HepG2 (cell line): ENCODE measurements at regions of chr3 and their contacts with region 1.

Region 1: DNA sequence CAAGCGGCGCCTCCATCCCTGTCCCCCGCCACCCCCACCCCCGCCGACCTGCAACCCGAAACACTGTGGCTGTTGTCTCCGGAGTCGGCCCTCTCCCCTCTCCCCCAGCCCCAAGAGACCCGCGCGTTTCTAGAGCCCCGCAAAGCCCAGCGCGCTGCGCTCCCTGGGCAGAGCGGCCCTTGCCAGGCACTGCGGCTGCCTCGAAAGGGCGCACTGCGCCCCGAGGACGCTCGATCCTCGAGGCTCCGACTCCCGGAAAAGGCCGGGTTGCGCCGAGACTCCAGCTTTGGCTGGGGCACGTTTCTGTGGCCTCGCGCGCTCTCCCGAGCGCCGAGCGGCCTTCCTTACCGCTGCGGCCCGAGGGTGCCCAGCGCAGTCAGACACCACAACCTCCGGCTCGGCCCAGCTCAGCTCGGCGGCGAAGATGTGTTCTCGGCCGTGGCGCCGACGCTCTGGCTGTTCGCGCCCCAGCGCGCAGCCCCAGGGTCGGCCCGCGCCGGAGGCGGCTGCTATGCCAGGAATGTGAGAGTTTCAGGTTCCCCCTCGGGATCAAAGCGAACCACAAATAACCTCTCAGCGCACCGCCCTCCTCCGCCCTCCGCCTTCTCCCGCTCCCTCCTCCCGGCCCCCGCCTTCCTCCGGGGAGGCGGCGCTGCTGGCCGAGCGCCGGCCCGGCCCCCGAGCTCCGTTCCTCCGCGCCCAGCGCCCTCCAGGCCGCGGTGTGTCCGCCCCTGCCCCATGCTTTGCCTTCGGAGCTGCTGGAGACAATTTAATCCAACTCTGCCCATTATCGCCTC is at the start of gene AMOTL2:
- DNase-seq: peak; percentile 89
- ATAC-seq: peak; percentile 81
- H3K4me3 ChIP-seq: peak within 1 kb of the TSS; percentile 89 to 94 (median 91)
- H3K27ac ChIP-seq: peak within 1 kb of the TSS; percentile 97
- H3K4me1 ChIP-seq: peaks cover 74% of the 10 kb centered on the region
- H3K27me3 ChIP-seq: peaks cover 0 to 24% of the 10 kb centered on the region in 2 experiments; a peak in 4 of 5 replicates
- CTCF ChIP-seq: no peak
- EP300 ChIP-seq: peak; percentile 88; a peak in 3 of 4 replicates
- POLR2A ChIP-seq: peak; percentile 84 to 96
- RAD21 ChIP-seq: no peak; the same call in none of the 2 replicates
- total RNA-seq, gene AMOTL2: 11.5 and 17.3 TPM in 2 replicates

Region 2: DNA sequence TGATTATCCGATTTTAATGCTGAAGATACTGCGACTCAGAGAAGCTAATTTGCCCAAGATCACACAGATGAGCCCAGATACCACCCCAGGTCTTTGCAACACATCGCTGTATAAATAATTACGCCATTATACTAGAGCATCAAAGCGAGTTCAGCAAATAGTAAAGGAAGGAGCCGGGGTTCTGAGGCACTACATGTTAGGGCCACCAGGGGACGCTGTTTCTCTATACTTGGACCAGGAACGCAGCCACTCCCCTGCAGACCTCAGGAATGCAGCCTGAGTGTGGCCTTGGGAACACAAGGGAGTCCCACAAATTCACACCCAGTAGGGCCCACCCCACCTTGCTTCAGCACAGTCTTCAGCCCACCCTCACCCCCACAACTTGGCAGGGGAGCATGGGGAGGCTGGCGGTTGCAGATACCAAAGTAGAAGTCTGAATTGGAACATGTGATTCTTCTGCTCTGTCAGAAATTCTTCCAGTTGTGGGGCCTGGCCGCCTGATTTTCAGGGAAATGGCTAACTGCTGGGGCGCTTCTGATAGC is 65.8 kb before region 1 on chr3:
- CTCF ChIA-PET with region 1: interaction called, 31 read pairs
- POLR2A ChIA-PET with region 1: interaction called, 53 read pairs
- in situ Hi-C with region 1: loop called (anchors 5 kb)
- intact Hi-C with region 1: loop called (anchors 1 kb)
- DNase-seq: peak; percentile 74
- ATAC-seq: peak; percentile 65
- H3K4me3 ChIP-seq: peak overlapping the region; percentile 27 to 60 (median 37); a peak in 5 of 6 replicates
- H3K27ac ChIP-seq: no peak overlapping the region
- H3K4me1 ChIP-seq: peaks cover 67% of the 10 kb centered on the region
- H3K27me3 ChIP-seq: no peaks in the 10 kb centered on the region; a peak in 1 of 5 replicates
- CTCF ChIP-seq: peak; percentile 99
- EP300 ChIP-seq: no peak
- POLR2A ChIP-seq: no peak
- RAD21 ChIP-seq: peak; percentile 98

Region 3: DNA sequence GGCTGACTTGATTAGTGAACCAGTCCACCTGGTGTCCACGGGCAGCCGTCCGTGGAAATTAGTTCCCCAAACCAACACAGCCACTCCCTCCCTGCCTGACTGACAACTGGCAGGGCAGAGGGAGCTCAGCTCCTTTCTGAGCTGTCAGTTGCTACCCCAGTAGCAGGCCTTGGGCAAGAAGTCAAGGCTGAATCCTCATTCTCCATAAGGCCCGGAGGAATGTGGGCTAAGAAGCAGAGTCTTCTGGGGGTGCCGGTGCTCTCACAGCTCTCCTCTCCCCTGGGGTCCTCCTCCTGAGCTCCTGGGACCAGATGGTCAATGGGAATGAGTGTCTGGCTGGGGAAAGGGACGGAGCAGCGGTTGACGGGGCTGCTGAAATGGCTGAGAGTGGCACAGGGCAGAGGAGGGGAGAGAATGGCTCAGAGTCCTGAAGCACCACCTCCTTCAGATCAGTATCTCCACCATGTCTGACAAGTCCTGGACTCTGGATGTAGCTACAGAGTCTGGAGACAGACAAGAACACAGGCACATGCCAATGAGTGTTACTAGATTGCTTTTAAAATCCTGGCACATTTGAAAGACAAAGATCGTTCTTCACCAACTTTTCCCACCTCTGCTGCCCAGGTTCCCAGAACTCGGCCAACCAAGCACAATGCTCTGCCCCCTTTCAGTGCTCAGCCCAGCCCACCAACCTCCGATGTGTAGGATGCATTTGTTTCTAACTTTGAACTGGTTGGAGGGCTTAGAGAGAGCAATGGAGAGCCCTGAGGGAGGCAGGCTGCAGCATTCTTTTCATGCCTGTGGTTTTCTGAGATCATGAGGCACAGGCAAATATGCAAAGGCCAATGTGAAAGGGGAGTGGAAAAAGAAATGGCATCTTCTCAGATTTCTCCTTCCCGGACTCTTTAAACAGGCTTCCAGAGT is 16.7 kb before region 1 on chr3:
- CTCF ChIA-PET with region 1: no interaction called
- POLR2A ChIA-PET with region 1: interaction called, 140 read pairs
- in situ Hi-C with region 1: no loop called
- intact Hi-C with region 1: loop called (anchors 1 kb)
- DNase-seq: peak; percentile 87
- ATAC-seq: peak; percentile 82
- H3K4me3 ChIP-seq: no peak overlapping the region
- H3K27ac ChIP-seq: peak overlapping the region; percentile 56
- H3K4me1 ChIP-seq: peaks cover 70% of the 10 kb centered on the region
- H3K27me3 ChIP-seq: no peaks in the 10 kb centered on the region
- CTCF ChIP-seq: no peak
- EP300 ChIP-seq: peak in 1 of 2 experiments; percentile 47; a peak in 2 of 4 replicates
- POLR2A ChIP-seq: no peak
- RAD21 ChIP-seq: no peak

Region 4: GRCh38 chr3:134392336-134392983 is 18.3 kb after region 1 on chr3:
- CTCF ChIA-PET with region 1: no interaction called
- POLR2A ChIA-PET with region 1: no interaction called
- in situ Hi-C with region 1: no loop called
- intact Hi-C with region 1: no loop called
- DNase-seq: no peak
- ATAC-seq: no peak
- H3K4me3 ChIP-seq: no peak overlapping the region
- H3K27ac ChIP-seq: no peak overlapping the region
- H3K4me1 ChIP-seq: peaks cover 20% of the 10 kb centered on the region
- H3K27me3 ChIP-seq: peaks cover 1 to 34% of the 10 kb centered on the region in 2 experiments
- CTCF ChIP-seq: no peak
- EP300 ChIP-seq: no peak
- POLR2A ChIP-seq: no peak
- RAD21 ChIP-seq: no peak

Region 5: DNA sequence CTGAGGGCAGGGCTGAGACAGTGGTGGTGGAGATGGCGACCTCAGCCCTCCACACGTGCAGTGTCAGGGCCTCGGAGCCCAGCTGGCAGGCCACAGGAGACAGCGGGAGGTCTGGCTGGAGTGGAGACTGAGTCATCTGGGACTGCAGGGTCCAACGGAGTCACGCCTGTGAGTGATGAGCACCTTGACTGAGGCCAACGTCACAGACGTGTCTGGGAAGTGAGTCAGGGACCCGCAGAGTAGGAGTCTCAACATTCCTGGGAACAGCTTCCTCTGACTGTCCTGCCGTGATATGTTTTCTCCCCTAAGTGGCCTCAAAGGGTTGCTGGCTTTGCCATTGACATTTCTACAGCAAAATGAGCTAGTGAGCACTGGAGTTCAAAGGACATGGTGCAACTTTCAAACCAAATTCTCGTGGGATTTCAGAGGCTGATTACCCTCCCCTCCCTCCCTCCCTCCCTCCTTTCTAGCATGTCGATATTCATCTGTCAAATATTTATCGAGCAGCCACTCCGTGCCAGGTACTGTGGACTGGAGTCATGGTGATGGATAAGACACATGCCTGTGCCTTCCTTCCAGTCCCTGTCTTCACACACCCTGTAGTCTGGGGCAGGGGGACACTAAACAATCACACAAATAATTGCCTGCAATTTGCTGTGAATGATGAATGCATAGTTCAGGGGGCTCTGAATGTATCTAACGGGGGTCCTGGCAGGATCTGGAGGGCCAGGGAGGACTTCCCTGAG is 53.4 kb after region 1 on chr3:
- CTCF ChIA-PET with region 1: no interaction called
- POLR2A ChIA-PET with region 1: interaction called, 15 read pairs
- in situ Hi-C with region 1: no loop called
- intact Hi-C with region 1: loop called (anchors 2 kb)
- DNase-seq: peak; percentile 75
- ATAC-seq: peak; percentile 64
- H3K4me3 ChIP-seq: peak overlapping the region in 2 of 3 experiments; percentile 8 to 58; a peak in 3 of 6 replicates
- H3K27ac ChIP-seq: peak overlapping the region; percentile 17
- H3K4me1 ChIP-seq: peaks cover 59% of the 10 kb centered on the region
- H3K27me3 ChIP-seq: no peaks in the 10 kb centered on the region; a peak in 1 of 5 replicates
- CTCF ChIP-seq: no peak
- EP300 ChIP-seq: no peak; a peak in 1 of 4 replicates
- POLR2A ChIP-seq: no peak
- RAD21 ChIP-seq: no peak

Region 6: DNA sequence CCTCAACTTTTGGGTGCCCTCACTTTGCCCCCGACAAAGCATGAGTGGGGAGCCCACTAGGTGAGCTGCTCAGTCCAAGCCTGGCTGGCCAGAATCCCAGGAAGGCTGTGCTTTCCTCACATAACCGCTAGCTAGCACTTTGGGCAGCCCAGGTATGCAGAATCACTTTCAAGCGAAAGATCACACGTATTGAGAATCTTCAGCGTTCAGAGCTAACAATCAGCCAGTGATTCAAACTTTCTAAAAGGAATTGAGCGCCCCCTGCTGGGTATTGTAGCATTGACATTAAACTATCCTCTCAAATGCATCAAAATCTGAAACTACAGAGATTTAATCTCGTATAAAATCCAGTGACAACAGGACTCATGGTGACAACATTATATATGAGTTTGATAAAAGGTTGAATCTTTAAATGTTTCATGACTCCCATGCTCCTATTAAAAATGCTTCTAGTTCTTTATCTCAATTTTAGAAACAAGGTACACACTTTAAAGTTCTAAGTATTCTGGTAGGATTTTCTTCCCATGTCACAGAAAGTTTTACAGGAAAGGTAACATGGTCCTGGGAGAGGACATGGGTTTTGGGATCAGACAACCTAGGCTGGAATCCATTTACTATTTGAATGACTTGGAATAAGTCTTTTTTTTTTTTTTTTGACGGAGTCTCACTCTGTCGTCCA is 99.8 kb after region 1 on chr3:
- CTCF ChIA-PET with region 1: no interaction called
- POLR2A ChIA-PET with region 1: interaction called, 4 read pairs
- in situ Hi-C with region 1: loop called (anchors 5 kb)
- intact Hi-C with region 1: loop called (anchors 5 kb)
- DNase-seq: peak; percentile 80
- ATAC-seq: peak; percentile 90
- H3K4me3 ChIP-seq: no peak overlapping the region
- H3K27ac ChIP-seq: no peak overlapping the region
- H3K4me1 ChIP-seq: peaks cover 29% of the 10 kb centered on the region
- H3K27me3 ChIP-seq: no peaks in the 10 kb centered on the region
- CTCF ChIP-seq: peak; percentile 78
- EP300 ChIP-seq: no peak
- POLR2A ChIP-seq: no peak
- RAD21 ChIP-seq: peak; percentile 63